Calu3 (cell line): ENCODE measurements at regions of chr18 and their contacts with region 1.

Region 1: GRCh38 chr18:45384137-45384961 is 230.9 kb upstream of the SLC14A2 start:
- DNase-seq: peak; percentile 71
- H3K4me3 Mint-ChIP-seq: no peak overlapping the region
- H3K27ac Mint-ChIP-seq: no peak overlapping the region
- H3K4me1 Mint-ChIP-seq: no peaks in the 10 kb centered on the region
- H3K27me3 Mint-ChIP-seq: no peaks in the 10 kb centered on the region
- CTCF ChIP-seq: peak; percentile 89

Region 2: DNA sequence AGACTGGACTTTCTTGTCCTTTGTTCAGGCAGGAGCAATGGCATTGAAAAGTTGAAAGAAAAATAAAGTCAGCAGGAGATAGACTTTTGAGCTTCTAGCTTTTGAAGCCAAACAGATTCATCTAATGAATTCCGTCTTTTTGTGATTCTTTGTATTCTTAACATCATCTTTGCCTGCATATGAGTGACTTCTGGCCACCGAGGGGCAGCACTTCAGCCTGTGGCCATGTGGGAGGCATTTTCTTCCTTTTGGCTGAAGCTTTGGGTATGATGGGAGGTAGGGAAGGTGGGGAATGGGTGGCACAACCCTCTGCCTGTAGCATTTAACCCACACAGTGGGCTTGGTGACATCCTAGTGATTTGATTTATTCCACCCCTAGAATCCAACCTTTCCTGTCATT is 483.1 kb before region 1 on chr18:
- CTCF ChIA-PET with region 1: no interaction called
- intact Hi-C with region 1: loop called (anchors 5 kb)
- DNase-seq: peak; percentile 9
- H3K4me3 Mint-ChIP-seq: no peak overlapping the region
- H3K27ac Mint-ChIP-seq: no peak overlapping the region
- H3K4me1 Mint-ChIP-seq: peaks cover 9% of the 10 kb centered on the region
- H3K27me3 Mint-ChIP-seq: no peaks in the 10 kb centered on the region
- CTCF ChIP-seq: no peak

Region 3: DNA sequence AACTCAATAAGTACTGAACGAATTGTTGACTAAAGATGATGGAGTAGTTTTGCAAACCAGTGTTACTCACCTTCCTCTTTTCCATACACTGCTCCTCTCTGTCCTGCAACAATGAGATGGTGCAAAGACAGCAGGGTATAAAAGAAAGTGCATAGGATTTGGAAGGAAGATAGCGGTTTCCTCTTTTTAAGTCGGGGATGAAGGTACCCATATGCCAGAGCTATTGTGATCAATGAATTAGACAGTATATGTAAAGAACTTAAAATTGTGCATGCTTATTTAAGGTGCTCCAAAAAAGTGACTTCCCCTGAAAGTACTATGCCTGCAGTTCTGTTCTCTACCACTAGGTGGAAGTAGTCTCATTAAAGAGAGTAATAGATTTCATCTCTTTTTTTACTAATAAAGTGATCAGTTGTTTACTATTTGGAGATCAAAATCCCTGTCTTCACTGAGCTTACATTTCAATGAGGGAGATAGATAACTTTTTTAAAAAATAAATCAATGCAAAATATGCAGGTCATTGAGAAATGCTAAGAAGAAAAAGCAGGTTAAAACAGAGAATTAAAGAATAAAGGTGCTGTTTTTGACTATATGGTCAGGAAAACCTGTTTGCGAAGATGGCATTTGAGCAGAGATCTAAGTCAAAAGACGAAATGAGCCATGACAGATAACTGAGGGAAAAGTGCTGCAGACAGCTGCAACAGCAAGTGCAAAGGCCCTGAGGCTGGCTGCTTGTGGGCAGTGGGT is 108.8 kb before region 1 on chr18:
- CTCF ChIA-PET with region 1: interaction called, 3 read pairs
- intact Hi-C with region 1: loop called (anchors 1 kb)
- DNase-seq: peak; percentile 40
- H3K4me3 Mint-ChIP-seq: no peak overlapping the region
- H3K27ac Mint-ChIP-seq: no peak overlapping the region
- H3K4me1 Mint-ChIP-seq: no peaks in the 10 kb centered on the region
- H3K27me3 Mint-ChIP-seq: peaks cover 26% of the 10 kb centered on the region
- CTCF ChIP-seq: peak; percentile 72